MCF 10A (cell line): ENCODE measurements at regions of chr7 and their contacts with region 1.

Region 1: GRCh38 chr7:49852619-49853462 is 79.4 kb downstream of the VWC2 start:
- DNase-seq: peak; percentile 66
- H3K4me3 Mint-ChIP-seq: no peak overlapping the region
- H3K27ac Mint-ChIP-seq: no peak overlapping the region
- H3K4me1 Mint-ChIP-seq: no peaks in the 10 kb centered on the region
- H3K27me3 Mint-ChIP-seq: peaks cover 33% of the 10 kb centered on the region
- CTCF ChIP-seq: peak; percentile 90

Region 2: DNA sequence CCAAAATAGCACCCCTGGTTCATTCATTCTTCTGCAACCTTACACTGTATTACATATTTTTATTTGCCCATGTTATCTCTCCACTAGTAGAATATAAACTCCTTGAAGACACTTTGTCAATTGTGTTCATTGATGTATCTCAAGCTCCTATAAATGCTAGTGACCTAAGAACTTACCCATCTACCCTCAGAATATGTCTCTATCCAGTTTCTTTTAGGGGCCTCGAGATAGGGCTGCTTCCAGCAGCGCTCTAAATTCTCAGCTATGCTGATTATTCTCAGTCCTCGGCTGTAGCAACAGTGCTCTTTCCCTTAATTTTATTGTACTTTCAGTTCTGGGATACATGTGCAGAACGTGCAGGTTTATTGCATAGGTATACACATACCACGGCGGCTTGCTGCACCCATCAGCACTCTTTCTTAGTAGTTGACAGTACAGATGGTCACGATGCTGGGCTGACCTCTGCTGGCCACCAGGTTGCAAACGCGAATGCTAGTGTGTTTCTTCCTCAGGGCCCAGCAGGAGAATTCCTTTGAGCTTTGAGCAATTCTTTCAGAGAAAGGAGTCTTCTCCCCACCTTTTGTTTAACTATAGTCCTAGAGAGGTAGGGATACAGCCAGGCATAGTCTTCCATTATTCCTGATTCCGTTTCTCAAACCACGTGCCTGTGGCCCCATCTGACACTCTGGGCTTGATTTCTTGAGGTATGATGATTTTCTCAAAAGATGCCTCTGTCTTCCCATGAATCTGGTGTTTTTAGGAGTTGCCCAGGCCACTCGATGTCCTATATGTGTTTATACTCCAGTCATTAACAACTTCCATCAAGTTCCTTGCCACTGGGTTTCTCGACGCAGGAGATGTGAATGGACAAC is 977.6 kb before region 1 on chr7:
- CTCF ChIA-PET with region 1: interaction called, 4 read pairs
- POLR2A ChIA-PET with region 1: no interaction called
- intact Hi-C with region 1: loop called (anchors 1 kb)
- DNase-seq: peak; percentile 43
- H3K4me3 Mint-ChIP-seq: no peak overlapping the region
- H3K27ac Mint-ChIP-seq: no peak overlapping the region
- H3K4me1 Mint-ChIP-seq: no peaks in the 10 kb centered on the region
- H3K27me3 Mint-ChIP-seq: peaks cover 49% of the 10 kb centered on the region
- CTCF ChIP-seq: peak; percentile 79

Region 3: DNA sequence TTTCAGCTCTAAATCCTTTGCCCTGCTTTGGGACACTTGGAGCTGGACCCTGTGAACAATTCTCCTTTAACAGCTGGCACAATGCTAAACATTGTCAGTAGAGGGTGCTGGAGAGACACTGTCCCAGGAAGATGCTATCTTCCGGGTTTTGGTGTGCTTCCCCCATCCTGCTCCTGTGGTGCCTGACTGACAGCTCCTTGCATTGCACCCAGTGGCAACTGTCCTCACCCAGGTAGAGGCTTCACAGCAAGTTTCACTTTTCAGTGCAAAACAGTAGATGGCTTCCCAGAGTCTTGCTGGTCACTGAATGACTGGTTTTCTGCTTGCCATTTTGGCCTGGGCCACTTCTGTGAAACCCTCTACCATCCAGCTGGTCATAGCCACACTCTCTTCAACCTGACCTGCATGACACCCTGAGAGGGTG is 851.2 kb before region 1 on chr7:
- CTCF ChIA-PET with region 1: interaction called, 3 read pairs
- POLR2A ChIA-PET with region 1: no interaction called
- intact Hi-C with region 1: loop called (anchors 1 kb)
- DNase-seq: peak; percentile 64
- H3K4me3 Mint-ChIP-seq: no peak overlapping the region
- H3K27ac Mint-ChIP-seq: no peak overlapping the region
- H3K4me1 Mint-ChIP-seq: no peaks in the 10 kb centered on the region
- H3K27me3 Mint-ChIP-seq: peaks cover 31% of the 10 kb centered on the region
- CTCF ChIP-seq: peak; percentile 56

Region 4: DNA sequence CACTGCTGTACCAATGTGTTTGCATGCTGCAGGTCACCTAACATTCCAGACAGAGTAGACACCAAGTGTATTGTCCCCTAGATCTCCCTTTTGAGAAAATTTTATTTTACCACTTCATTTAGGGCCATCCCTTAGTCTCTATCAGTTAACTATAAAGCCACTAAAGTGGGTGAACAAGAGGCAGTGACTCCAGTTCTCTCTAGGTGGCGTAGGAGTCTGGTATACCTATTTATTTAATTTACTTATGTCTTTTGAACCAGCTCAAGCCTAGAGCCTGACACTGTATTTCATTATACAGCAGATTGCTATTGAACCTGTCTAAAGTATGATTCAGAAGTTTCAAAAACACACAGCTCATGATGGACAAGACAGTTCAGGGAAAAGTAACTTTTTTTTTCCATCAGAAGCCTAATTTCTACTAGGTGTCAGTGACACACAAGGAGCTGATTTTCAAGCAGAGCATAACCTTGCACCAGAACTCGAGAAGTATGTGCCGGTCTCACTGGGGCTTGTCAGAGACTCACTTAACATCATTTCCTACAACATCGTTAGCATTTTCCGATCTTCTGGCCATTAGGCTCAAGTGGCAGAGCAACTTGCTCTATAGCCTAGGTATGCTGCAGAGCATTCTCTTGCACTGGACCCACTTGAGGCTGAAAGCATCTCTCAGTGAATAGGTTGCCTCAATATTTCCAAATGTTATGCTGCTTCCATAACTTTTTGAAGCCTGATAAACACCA is 753.1 kb before region 1 on chr7:
- CTCF ChIA-PET with region 1: no interaction called
- POLR2A ChIA-PET with region 1: no interaction called
- intact Hi-C with region 1: loop called (anchors 1 kb)
- DNase-seq: peak; percentile 21
- H3K4me3 Mint-ChIP-seq: no peak overlapping the region
- H3K27ac Mint-ChIP-seq: no peak overlapping the region
- H3K4me1 Mint-ChIP-seq: no peaks in the 10 kb centered on the region
- H3K27me3 Mint-ChIP-seq: peaks cover 41% of the 10 kb centered on the region
- CTCF ChIP-seq: peak; percentile 33

Region 5: DNA sequence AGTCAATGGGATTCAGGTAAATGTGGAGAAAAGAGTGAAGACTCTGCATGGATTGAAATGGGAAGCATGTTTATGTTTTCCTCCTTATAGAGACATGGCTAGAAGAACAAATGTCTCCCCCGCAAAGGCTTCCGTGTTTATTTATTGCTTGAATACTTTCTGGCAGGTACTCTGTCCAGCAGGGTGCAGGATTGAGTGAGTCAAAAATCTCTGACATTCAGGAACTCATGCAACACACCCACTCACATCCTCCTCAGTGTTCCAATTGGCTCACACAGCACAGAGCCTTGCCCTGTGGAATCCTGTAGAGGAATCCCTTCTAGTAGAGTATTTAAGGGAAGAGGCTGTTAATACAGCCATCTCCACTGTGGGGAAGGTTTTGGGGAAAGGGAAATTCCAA is 369.7 kb before region 1 on chr7:
- CTCF ChIA-PET with region 1: no interaction called
- POLR2A ChIA-PET with region 1: no interaction called
- intact Hi-C with region 1: loop called (anchors 10 kb)
- DNase-seq: peak; percentile 29
- H3K4me3 Mint-ChIP-seq: no peak overlapping the region
- H3K27ac Mint-ChIP-seq: no peak overlapping the region
- H3K4me1 Mint-ChIP-seq: no peaks in the 10 kb centered on the region
- H3K27me3 Mint-ChIP-seq: peaks cover 58% of the 10 kb centered on the region
- CTCF ChIP-seq: no peak

Region 6: DNA sequence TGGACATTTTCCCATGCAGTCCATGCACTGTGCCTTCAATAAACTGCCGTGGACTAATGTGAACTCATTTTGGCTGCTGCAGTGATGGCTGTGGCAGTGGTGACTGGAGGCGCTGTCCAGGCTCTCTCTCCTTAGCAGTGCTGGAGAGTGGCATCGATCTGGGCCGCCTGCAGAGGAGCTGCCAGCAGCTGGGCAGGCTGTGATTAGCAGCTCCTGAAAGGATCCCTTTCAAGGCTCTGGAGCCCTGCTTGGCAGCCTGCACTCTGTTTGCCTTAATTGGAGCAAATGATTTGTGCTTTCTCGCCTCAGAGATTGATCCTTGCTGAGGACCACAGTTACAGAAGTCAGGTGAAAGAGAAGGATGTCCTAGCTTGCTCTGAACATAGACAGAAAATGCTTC is 209.5 kb before region 1 on chr7:
- CTCF ChIA-PET with region 1: no interaction called
- POLR2A ChIA-PET with region 1: no interaction called
- intact Hi-C with region 1: no loop called
- DNase-seq: no peak
- H3K4me3 Mint-ChIP-seq: no peak overlapping the region
- H3K27ac Mint-ChIP-seq: no peak overlapping the region
- H3K4me1 Mint-ChIP-seq: no peaks in the 10 kb centered on the region
- H3K27me3 Mint-ChIP-seq: no peaks in the 10 kb centered on the region
- CTCF ChIP-seq: no peak